GM10248 (cell line): ENCODE measurements at regions of chr11 and their contacts with region 1.

Region 1: GRCh38 chr11:10328314-10329090 is 23.6 kb downstream of the ADM start:
- DNase-seq: no peak
- CTCF ChIP-seq: no peak

Region 2: GRCh38 chr11:9493492-9493891 is 835.0 kb before region 1 on chr11:
- CTCF ChIA-PET with region 1: no interaction called
- POLR2A ChIA-PET with region 1: no interaction called
- DNase-seq: no peak
- CTCF ChIP-seq: no peak

Region 3: DNA sequence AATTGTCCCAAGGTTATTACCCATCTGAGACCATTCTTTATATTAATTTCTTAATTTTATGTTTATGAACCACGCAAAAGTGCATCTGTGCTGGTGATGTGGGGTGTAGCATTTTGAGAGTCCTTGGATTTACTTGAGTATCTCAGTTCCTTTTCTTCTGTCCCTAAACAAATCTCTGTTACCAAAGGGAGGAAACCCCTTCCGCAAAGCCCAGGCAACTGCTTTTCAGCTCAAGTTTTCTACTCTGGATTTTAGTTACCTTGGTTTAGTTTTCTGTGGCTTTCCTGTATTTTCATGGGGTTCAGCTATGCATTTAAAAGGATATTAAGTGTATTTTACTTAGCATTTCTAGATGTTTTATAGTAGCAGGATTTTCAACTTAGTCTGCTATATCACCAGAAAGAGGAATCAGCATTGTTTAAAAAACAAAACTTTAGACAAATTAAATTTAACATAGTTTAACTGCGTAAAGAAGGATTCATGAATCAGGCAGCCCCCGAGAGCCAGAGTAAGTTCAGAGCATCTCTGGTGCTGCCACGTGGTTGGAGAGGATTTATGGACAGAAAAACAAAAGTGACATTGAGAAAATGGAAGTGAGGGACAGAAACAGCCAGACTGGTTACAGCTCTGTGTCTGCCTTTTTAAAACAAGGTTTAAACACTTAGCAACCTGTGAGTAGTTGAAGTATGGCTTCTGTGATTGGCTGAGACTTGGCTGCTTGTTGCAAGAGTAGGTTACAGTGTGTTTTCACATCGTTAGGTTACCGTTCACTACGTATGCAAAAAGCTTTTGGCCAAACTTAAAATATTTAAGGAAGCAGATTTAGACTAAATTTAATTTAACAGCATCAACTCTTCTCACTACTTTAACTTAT is 14.1 kb before region 1 on chr11:
- CTCF ChIA-PET with region 1: interaction called, 53 read pairs
- POLR2A ChIA-PET with region 1: interaction called, 5 read pairs
- DNase-seq: peak; percentile 51
- CTCF ChIP-seq: no peak